ENCODE measurements at regions of chr7 and their contacts with region 1.

Region 1: DNA sequence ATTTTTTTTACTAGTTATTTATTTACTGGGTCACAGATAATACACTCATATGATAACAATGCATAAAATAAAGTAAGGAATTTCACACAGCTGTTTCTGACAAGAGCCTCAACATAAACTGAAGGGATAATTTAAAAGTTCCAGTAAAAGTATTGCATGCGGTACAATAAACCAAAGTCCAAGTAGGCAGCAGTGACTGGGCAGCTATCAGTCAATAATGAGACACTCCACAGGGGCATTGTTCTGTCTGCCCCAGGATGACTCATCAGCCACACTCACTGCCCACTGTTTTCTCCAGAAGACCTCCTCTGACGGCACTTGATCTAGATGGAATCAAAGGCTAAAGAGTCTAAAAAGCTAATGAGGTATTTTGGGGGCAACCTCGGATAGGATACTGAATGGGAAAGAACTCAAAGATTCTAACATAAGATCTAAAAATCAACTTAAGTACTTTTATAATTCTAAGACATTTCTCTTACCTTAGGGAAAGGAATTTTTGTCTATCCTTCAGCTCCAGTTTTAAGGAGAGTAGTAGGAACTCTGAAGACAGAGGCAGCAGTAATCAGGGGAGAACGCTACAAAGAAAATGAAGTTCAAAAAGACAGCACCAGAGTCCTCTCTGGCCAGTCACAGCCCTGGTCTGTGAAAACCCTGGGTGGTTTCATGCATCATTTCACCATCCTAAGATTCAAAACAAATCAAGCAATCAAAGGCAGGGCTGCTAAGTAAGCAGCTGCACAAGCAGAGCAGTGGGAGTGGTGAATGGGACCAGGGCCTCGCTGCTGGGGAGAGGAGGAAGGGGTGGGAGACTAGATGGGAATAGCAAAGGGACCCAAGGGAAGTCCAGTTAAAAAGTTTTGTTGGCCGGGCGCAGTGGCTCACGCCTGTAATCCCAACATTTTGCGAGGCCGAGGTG is 175.1 kb downstream of the AVL9 start:
- DNase-seq: peak; percentile 13 to 67 (median 34)
- ATAC-seq: peak; percentile 50
- H3K4me3 ChIP-seq: no peak overlapping the region
- H3K27ac ChIP-seq: peak overlapping the region; percentile 82
- H3K4me1 ChIP-seq: peaks cover 4 to 32% of the 10 kb centered on the region in 2 experiments
- H3K27me3 ChIP-seq: no peaks in the 10 kb centered on the region
- CTCF ChIP-seq: no peak
- EP300 ChIP-seq: no peak
- POLR2A ChIP-seq: no peak
- RAD21 ChIP-seq: no peak

Region 2: DNA sequence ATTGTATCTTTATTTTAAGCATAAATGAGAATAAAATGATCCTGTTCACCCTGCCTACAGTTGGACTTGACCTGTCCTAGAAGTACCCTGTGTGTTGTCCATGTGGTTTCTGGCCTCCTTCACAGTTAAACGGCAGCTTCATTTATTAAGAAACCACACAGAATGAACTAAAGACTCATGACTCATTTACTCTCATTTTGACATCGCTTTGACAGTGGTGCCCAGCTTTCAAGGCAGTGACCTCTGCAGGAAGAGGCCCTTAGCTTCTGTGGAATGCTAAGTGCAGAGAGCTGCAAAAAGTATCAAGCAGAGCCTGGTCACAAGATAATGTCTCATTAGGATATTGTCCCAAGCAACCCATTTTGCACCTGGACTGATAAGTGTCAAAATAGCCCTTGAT is 81.7 kb before region 1 on chr7:
- CTCF ChIA-PET with region 1: no interaction called
- POLR2A ChIA-PET with region 1: no interaction called
- in situ Hi-C with region 1: no loop called
- intact Hi-C with region 1: loop called (anchors 5 kb)
- DNase-seq: peak in 1 of 4 experiments; percentile 22
- ATAC-seq: peak; percentile 8; the same call in 2 of the 3 replicates
- H3K4me3 ChIP-seq: no peak overlapping the region
- H3K27ac ChIP-seq: 0 out of 3 replicates have a peak overlapping the region, but pooled peaks have one; percentile 1
- H3K4me1 ChIP-seq: peaks cover 5 to 24% of the 10 kb centered on the region in 2 experiments; a peak in 3 of 5 replicates
- H3K27me3 ChIP-seq: no peaks in the 10 kb centered on the region
- CTCF ChIP-seq: no peak
- EP300 ChIP-seq: no peak
- POLR2A ChIP-seq: no peak
- RAD21 ChIP-seq: no peak

Region 3: DNA sequence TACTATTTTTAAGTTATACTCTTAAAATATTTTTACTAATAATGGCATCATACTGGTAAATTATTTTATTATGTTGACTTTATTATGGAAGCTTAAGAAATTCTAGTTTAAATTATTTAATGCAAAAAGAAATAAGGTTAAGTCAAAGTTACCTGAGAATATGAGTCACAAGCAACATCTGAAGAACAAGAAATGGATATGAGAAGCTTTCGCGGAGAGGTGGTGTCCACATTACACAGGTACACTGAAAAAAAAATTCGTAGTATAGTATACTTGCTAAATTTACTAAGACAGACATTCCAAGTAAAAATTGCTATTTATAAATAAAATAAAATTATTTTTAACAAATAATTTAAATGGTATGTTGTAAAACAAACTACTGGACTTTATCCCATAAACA is 31.2 kb before region 1 on chr7:
- CTCF ChIA-PET with region 1: no interaction called
- POLR2A ChIA-PET with region 1: interaction called, 4 read pairs
- in situ Hi-C with region 1: no loop called
- intact Hi-C with region 1: loop called (anchors 5 kb)
- DNase-seq: no peak
- ATAC-seq: no peak
- H3K4me3 ChIP-seq: no peak overlapping the region
- H3K27ac ChIP-seq: no peak overlapping the region
- H3K4me1 ChIP-seq: peaks cover 0 to 7% of the 10 kb centered on the region in 2 experiments; a peak in 3 of 5 replicates
- H3K27me3 ChIP-seq: no peaks in the 10 kb centered on the region
- CTCF ChIP-seq: no peak
- EP300 ChIP-seq: no peak
- POLR2A ChIP-seq: no peak
- RAD21 ChIP-seq: no peak